ENCODE measurements at regions of chr7 and their contacts with region 1.

Region 1: GRCh38 chr7:113698556-113699220 is 220.1 kb downstream of the PPP1R3A start:
- DNase-seq: no peak
- H3K4me3 ChIP-seq: no peak overlapping the region
- H3K27ac ChIP-seq: no peak overlapping the region
- H3K4me1 ChIP-seq: no peaks in the 10 kb centered on the region
- H3K27me3 ChIP-seq: no peaks in the 10 kb centered on the region
- CTCF ChIP-seq: peak; percentile 77

Region 2: GRCh38 chr7:113404245-113404644 is 294.4 kb before region 1 on chr7:
- intact Hi-C with region 1: loop called (anchors 10 kb)
- DNase-seq: no peak
- H3K4me3 ChIP-seq: no peak overlapping the region
- H3K27ac ChIP-seq: no peak overlapping the region
- H3K4me1 ChIP-seq: no peaks in the 10 kb centered on the region
- H3K27me3 ChIP-seq: peaks cover 11% of the 10 kb centered on the region
- CTCF ChIP-seq: peak; percentile 51

Region 3: GRCh38 chr7:113764401-113765035 is 65.8 kb after region 1 on chr7:
- intact Hi-C with region 1: no loop called
- DNase-seq: no peak
- H3K4me3 ChIP-seq: no peak overlapping the region
- H3K27ac ChIP-seq: no peak overlapping the region
- H3K4me1 ChIP-seq: peaks cover 11% of the 10 kb centered on the region
- H3K27me3 ChIP-seq: no peaks in the 10 kb centered on the region
- CTCF ChIP-seq: no peak

Region 4: DNA sequence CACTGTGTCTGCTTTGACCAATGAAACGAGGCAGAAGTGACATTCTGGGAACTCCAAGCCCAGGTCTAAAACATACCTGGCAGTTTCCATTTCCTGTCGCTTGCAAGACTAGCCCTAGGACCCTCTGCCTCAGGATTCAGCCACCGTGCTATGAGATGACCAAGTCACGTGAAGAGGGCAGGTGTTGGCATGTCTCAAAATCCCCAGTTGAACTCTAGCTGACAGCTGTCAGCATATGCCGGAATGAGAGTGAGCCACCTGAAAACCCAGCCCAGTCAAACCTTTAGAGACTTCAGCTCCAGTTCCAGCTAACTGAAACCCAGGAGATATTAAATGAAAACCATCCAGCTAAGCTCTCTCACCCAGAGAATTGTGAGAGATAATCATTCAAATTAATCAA is 310.0 kb after region 1 on chr7:
- intact Hi-C with region 1: no loop called
- DNase-seq: no peak
- H3K4me3 ChIP-seq: no peak overlapping the region
- H3K27ac ChIP-seq: no peak overlapping the region
- H3K4me1 ChIP-seq: no peaks in the 10 kb centered on the region
- H3K27me3 ChIP-seq: no peaks in the 10 kb centered on the region
- CTCF ChIP-seq: no peak